ENCODE measurements at regions of chr11 and their contacts with region 1.

Region 1: GRCh38 chr11:61129639-61130523 is 27.6 kb downstream of the CD5 start:
- DNase-seq: peak; percentile 90 to 94
- H3K4me3 ChIP-seq: no peak overlapping the region
- H3K4me3 Mint-ChIP-seq: no peak overlapping the region
- H3K27ac Mint-ChIP-seq: peak overlapping the region; percentile 60
- H3K4me1 ChIP-seq: peaks cover 6% of the 10 kb centered on the region; the same call in 1 of the 2 replicates
- H3K4me1 Mint-ChIP-seq: peaks cover 9% of the 10 kb centered on the region
- H3K27me3 ChIP-seq: no peaks in the 10 kb centered on the region
- H3K27me3 Mint-ChIP-seq: no peaks in the 10 kb centered on the region
- CTCF ChIP-seq: peak; percentile 99 to 100

Region 2: DNA sequence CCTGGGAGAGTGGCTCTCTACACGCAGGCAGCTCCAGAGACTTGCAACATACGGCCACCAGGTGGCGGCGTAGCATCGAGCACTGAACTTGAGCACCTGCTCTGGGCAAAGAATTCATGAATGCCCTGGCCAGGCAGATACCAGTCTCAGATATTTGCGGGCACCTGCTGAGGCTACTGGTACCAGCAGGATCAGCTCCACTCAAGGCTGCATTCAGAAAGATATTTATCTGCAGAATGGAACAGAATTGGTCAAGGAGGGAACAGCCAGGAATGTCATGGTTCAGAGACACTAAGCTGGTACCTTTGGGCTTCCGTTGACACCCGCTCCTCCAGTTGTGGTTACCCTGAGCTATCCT is 298.8 kb before region 1 on chr11:
- CTCF ChIA-PET with region 1: no interaction called
- POLR2A ChIA-PET with region 1: no interaction called
- intact Hi-C with region 1: loop called (anchors 1 kb)
- DNase-seq: peak; percentile 70 to 83
- H3K4me3 ChIP-seq: no peak overlapping the region
- H3K4me3 Mint-ChIP-seq: no peak overlapping the region
- H3K27ac Mint-ChIP-seq: no peak overlapping the region
- H3K4me1 ChIP-seq: no peaks in the 10 kb centered on the region
- H3K4me1 Mint-ChIP-seq: no peaks in the 10 kb centered on the region
- H3K27me3 ChIP-seq: no peaks in the 10 kb centered on the region
- H3K27me3 Mint-ChIP-seq: peaks cover 3% of the 10 kb centered on the region
- CTCF ChIP-seq: peak; percentile 92 to 94

Region 3: GRCh38 chr11:60944490-60945294 is 185.2 kb before region 1 on chr11:
- CTCF ChIA-PET with region 1: no interaction called
- POLR2A ChIA-PET with region 1: no interaction called
- intact Hi-C with region 1: no loop called
- DNase-seq: no peak
- H3K4me3 ChIP-seq: no peak overlapping the region
- H3K4me3 Mint-ChIP-seq: no peak overlapping the region
- H3K27ac Mint-ChIP-seq: no peak overlapping the region
- H3K4me1 ChIP-seq: no peaks in the 10 kb centered on the region; the same call in none of the 2 replicates
- H3K4me1 Mint-ChIP-seq: peaks cover 7% of the 10 kb centered on the region
- H3K27me3 ChIP-seq: no peaks in the 10 kb centered on the region
- H3K27me3 Mint-ChIP-seq: no peaks in the 10 kb centered on the region
- CTCF ChIP-seq: no peak

Region 4: DNA sequence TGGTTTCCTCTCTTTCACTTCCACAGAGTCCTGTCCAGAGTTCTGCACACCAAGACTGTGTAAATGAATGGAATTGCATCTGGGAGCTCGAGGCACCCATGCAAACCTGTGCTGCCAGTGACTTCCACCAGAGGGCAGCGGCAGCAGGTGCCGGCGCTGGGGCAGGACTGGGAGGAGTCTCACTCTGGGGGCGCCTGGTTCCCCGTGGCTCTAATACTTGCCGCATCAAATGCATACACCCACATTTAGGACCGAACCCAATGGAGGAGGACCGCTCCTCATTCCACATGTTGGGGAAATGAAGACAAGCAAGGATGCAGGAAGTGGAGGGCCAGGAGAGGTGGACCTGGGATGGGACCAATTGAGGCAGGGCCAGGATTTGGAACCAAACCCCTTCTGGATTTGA is 159.5 kb before region 1 on chr11:
- CTCF ChIA-PET with region 1: interaction called, 9 read pairs
- POLR2A ChIA-PET with region 1: no interaction called
- intact Hi-C with region 1: loop called (anchors 1 kb)
- DNase-seq: peak in 1 of 2 experiments; percentile 65
- H3K4me3 ChIP-seq: no peak overlapping the region
- H3K4me3 Mint-ChIP-seq: no peak overlapping the region
- H3K27ac Mint-ChIP-seq: no peak overlapping the region
- H3K4me1 ChIP-seq: no peaks in the 10 kb centered on the region
- H3K4me1 Mint-ChIP-seq: no peaks in the 10 kb centered on the region
- H3K27me3 ChIP-seq: no peaks in the 10 kb centered on the region
- H3K27me3 Mint-ChIP-seq: peaks cover 3% of the 10 kb centered on the region
- CTCF ChIP-seq: peak; percentile 65 to 85

Region 5: GRCh38 chr11:61163714-61164605 is 34.1 kb after region 1 on chr11:
- CTCF ChIA-PET with region 1: interaction called, 5 read pairs
- POLR2A ChIA-PET with region 1: interaction called, 3 read pairs
- intact Hi-C with region 1: loop called (anchors 2 kb)
- DNase-seq: peak in 1 of 2 experiments; percentile 2
- H3K4me3 ChIP-seq: no peak overlapping the region
- H3K4me3 Mint-ChIP-seq: peak overlapping the region; percentile 65
- H3K27ac Mint-ChIP-seq: peak overlapping the region; percentile 89
- H3K4me1 ChIP-seq: peaks cover 54% of the 10 kb centered on the region
- H3K4me1 Mint-ChIP-seq: peaks cover 33% of the 10 kb centered on the region
- H3K27me3 ChIP-seq: no peaks in the 10 kb centered on the region
- H3K27me3 Mint-ChIP-seq: no peaks in the 10 kb centered on the region
- CTCF ChIP-seq: no peak

Region 6: GRCh38 chr11:61187505-61188130 is 57.7 kb after region 1 on chr11:
- CTCF ChIA-PET with region 1: interaction called, 3 read pairs
- POLR2A ChIA-PET with region 1: no interaction called
- intact Hi-C with region 1: loop called (anchors 1 kb)
- DNase-seq: peak; percentile 74 to 85
- H3K4me3 ChIP-seq: no peak overlapping the region
- H3K4me3 Mint-ChIP-seq: no peak overlapping the region
- H3K27ac Mint-ChIP-seq: no peak overlapping the region
- H3K4me1 ChIP-seq: no peaks in the 10 kb centered on the region
- H3K4me1 Mint-ChIP-seq: peaks cover 7% of the 10 kb centered on the region
- H3K27me3 ChIP-seq: no peaks in the 10 kb centered on the region; the same call in 1 of the 2 replicates
- H3K27me3 Mint-ChIP-seq: no peaks in the 10 kb centered on the region
- CTCF ChIP-seq: peak; percentile 95 to 98